Pancreas (tissue), 10 donors: ENCODE measurements at regions of chr6 and their contacts with region 1.

Region 1: DNA sequence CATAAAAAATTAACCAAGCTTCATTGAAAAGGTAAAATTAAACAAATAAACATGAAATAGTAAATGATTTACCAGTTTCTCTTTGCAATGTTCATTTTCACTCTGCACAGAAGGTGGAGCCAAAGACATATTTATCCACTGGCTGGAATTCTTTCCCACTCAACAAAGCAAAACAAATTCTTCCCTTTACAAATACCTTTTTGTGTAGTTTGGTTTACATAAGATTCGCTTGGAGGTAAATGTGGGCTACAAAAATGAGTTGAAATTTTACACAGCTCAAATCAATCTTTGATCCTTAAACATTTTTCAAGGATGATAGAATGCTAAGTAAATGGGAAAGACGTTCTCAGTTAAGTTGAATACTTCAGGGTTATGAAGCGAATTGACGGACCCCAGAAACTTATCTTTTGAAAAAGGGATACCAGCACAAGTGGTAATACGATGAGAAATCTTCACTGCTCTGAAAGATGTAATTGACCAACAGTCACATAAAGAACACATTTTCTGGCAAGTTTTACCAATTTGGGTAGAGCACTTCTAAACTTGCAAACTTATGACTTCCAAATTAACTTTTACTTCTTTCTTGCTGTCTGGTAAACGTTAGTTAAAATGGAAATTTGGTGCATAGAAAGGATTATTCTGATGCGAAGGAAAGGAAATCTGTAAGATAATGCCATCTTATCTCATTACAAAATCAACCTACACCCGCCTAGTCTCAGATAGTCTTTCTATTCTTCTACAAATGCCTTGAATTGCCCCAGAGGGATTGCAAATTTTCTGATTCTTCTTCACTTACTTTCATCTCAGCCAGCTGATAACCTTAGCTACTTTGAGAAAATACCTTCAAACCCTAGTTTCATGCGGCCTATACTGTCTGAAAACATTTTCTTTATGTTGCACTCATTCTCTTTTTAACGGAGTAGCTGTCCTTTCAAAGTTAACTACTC is 4.7 kb upstream of the GJA1 start:
- DNase-seq: no peak
- ATAC-seq: peak; percentile 86 to 93 (median 88)
- H3K4me3 ChIP-seq: no peak overlapping the region
- H3K27ac ChIP-seq: no peak overlapping the region
- H3K4me1 ChIP-seq: peaks cover 0 to 5% (median 0%) of the 10 kb centered on the region in 3 donors
- H3K27me3 ChIP-seq: no peaks in the 10 kb centered on the region
- CTCF ChIP-seq: peak in 3 of 4 donors; percentile 22 to 43 (median 42)

Region 2: GRCh38 chr6:122033539-122034181 is 602.9 kb after region 1 on chr6:
- intact Hi-C with region 1: loop called (anchors 5 to 10 kb)
- DNase-seq: no peak
- ATAC-seq: peak; percentile 84 to 97 (median 94)
- H3K4me3 ChIP-seq: no peak overlapping the region
- H3K27ac ChIP-seq: no peak overlapping the region
- H3K4me1 ChIP-seq: no peaks in the 10 kb centered on the region
- H3K27me3 ChIP-seq: no peaks in the 10 kb centered on the region
- CTCF ChIP-seq: peak; percentile 32 to 45 (median 40)

Region 3: DNA sequence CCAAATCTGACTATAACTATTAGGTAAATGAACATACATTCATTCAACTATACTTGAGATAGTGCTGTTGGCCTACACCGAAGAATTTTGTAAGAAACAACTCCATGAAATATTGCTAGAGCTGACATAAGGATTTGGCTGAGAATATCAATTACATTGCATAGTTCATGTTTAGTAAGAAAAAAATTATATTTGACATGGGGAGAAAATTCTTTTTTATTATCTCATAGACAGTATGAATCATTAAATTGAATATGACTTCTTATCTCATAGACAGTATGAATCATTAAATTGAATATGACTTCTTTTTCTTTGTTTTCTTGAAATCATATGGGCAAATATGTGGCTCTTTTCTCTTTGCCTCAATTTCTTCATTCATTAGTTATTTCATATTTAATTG is 756.4 kb after region 1 on chr6:
- intact Hi-C with region 1: loop called in 1 of 3 experiments (anchors 5 kb)
- DNase-seq: no peak
- ATAC-seq: no peak
- H3K4me3 ChIP-seq: no peak overlapping the region
- H3K27ac ChIP-seq: no peak overlapping the region
- H3K4me1 ChIP-seq: no peaks in the 10 kb centered on the region
- H3K27me3 ChIP-seq: no peaks in the 10 kb centered on the region
- CTCF ChIP-seq: no peak